Activated CD4-positive, alpha-beta T cell treated with anti-CD3 and anti-CD28 coated beads, Interleukin-2, amount 10 ng/mL, durations not matched to agents 24 days and 14 days (primary cell): ENCODE measurements at regions of chr4 and their contacts with region 1.

Region 1: DNA sequence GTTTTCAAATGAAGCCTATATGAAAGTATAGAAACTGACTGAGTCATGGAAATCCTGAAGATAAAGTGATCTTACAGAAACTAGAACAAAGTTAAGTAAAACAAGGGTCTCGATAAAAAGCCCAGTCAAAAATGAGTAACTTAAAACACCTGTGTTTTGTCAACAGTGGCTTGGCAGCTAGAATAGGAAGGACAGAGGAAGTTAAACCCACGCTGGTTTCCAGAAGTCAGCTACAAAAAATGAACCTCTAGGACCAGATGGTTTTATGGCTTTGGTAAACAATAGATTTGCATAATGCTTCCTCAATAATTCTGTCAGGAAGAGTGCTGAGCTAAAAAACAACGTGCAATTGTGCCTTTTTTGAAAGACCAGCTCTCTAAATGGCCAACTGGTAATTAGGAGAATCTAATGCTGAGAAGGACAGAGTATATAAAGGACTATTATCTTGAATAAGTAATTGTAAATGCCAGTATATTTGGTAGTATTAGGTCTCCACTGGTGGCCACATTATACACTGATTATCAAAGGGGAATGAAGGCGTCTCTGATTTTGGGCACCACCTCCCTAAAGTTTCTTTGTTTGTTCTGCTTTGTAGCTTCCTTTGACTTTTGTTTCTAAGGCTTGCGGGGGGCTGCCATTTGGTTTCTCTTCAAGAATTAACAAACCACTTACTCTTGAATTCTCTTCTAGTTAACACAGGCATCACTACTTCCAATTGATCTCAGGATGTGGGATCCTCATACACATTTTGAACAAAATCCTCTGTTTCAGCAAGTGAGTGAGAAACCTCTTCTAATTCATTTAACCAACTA is 72.2 kb upstream of the PPP3CA start:
- DNase-seq: peak; percentile 63
- H3K4me3 Mint-ChIP-seq: peak overlapping the region; percentile 71
- H3K27ac Mint-ChIP-seq: peak overlapping the region; percentile 55
- H3K4me1 Mint-ChIP-seq: peaks cover 44% of the 10 kb centered on the region
- H3K27me3 Mint-ChIP-seq: peaks cover 26% of the 10 kb centered on the region

Region 2: DNA sequence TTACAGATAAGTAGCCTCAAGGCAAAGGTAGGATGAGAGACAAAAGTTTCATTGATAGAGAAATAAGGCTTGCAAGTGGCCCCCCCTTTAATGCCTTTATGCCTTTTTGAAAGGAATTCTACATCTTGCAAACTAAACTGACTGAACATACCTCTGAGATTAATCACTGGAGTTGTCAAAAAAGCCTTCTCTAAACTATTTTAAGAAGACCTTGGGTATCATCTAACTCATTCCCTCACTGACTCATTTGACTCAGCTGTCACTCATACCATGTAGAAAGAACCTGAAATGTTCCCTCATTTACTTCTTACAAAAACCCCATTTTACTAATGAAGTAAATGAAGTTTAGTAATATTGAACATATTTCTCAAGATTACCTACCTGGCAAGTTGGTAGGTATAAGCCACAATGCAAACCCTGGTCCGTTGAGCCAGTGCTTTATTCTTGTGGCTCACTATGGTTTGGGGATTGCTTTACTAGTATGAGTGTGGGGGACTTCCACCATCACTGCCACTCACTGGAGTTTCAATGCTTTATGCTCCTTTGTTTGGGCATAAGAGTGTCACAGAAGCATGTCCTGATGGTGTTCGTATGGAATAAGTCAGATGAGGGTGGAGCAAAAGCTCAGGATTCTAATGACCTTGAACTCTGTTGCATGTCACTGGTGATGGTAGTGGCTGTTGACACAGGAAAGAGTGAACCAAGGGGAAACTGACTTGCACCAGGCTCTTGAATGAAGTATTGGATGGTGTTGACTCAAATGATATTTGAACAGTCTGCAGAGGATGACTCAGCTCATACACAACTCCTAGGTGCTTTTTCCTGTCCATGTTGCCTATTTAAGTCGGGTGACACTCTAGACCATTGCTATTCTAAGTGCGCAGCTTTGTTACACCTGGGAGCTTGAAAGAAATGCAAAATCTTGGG is 596.2 kb before region 1 on chr4:
- intact Hi-C with region 1: loop called (anchors 10 kb)
- DNase-seq: peak; percentile 65
- H3K4me3 Mint-ChIP-seq: no peak overlapping the region
- H3K27ac Mint-ChIP-seq: peak overlapping the region; percentile 86
- H3K4me1 Mint-ChIP-seq: peaks cover 19% of the 10 kb centered on the region
- H3K27me3 Mint-ChIP-seq: no peaks in the 10 kb centered on the region

Region 3: DNA sequence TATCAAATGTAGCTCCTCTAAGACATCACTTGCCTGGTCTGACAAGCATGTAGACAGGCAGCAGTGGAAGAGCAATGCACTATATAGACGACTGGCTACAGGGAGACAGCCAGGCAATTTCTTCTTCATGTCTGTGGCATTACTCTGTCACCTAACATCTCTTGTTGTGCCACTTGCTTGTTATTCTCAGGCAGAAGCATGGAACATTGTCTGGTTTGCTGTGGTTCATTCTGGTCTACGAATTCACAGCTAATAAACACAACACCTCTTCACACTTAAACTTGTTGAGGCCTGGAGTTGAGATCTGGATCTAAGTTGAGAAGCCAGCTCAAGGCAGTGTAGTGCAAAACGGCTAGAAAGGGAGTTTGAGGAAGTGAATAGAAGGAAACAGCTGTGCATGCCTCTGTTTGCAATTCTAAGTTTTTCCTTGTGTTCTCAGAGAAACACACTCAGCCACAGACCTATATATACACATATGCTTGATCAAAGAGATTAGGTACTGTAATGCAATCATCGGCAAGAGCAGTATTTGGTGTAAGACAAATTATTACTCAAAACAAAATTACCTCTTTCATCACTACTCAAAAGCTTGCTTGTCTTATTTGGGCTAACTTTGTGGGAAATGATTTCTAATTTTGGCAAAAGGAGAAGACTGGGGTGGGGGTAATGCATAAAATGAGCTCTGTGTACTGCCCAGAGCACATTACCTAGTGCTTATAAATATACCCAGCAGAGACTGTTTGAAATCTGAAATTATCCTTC is 316.0 kb before region 1 on chr4:
- intact Hi-C with region 1: loop called (anchors 5 kb)
- DNase-seq: peak; percentile 58
- H3K4me3 Mint-ChIP-seq: no peak overlapping the region
- H3K27ac Mint-ChIP-seq: peak overlapping the region; percentile 45
- H3K4me1 Mint-ChIP-seq: peaks cover 21% of the 10 kb centered on the region
- H3K27me3 Mint-ChIP-seq: no peaks in the 10 kb centered on the region

Region 4: GRCh38 chr4:101205916-101206315 is 213.6 kb before region 1 on chr4:
- intact Hi-C with region 1: loop called (anchors 1 kb)
- DNase-seq: peak; percentile 86
- H3K4me3 Mint-ChIP-seq: peak overlapping the region; percentile 13
- H3K27ac Mint-ChIP-seq: peak overlapping the region; percentile 50
- H3K4me1 Mint-ChIP-seq: peaks cover 23% of the 10 kb centered on the region
- H3K27me3 Mint-ChIP-seq: peaks cover 3% of the 10 kb centered on the region

Region 5: DNA sequence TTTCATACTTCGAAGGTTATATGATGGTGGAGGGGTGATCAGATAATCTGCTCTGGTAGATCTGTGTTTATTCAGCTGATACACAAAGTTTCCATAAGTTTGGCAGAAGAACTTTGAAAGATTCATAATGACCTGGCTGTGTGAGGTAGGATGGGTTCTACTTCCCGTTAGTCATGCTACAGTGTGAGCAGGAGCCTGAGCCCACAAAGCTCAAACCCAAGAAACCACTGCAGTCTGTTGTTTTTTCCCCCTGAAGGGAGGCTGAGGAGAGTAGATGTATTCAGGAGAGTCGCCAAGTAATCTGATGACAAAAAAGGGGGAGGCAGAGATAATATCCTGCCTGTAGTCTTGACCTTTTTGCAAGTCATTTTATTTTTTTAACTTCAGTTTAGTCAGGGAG is 19.4 kb before region 1 on chr4:
- intact Hi-C with region 1: loop called (anchors 1 kb)
- DNase-seq: peak; percentile 71
- H3K4me3 Mint-ChIP-seq: no peak overlapping the region
- H3K27ac Mint-ChIP-seq: peak overlapping the region; percentile 21
- H3K4me1 Mint-ChIP-seq: peaks cover 14% of the 10 kb centered on the region
- H3K27me3 Mint-ChIP-seq: peaks cover 11% of the 10 kb centered on the region

Region 6: DNA sequence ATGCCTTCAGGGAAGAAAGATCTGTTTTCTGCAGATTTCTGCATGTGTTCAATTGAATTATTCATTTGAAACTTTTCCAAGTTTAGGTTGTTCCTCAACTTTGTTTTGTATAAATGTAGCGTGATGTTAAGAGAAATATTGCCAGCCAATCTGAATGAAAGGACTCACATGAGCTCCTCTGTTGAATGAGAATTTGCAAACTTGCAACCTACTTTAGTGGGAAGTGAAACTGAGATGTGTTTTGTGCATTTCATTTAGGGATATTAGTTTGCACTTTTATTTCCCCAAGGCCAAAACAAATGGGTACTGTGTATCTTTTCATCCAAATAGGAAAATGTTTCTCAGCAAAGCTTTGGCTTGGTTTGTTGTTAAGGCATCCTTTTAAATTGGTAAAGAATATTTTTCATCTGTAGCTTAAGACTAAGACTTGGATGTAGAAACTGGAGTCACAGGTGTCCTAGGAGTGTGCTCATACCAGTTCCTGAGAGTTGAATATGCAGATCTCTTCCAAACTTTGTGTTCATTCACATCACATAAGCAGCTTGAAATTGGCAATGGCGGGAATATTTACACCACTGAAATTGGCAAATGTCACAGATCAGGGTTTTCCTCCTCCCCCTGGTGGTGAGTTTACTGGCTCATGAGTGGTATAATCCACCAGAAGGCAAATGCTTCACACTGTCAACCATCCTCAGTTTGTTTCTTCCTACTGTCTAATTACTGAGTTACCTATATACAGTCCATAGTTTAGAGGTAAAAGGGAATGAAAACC is 177.4 kb after region 1 on chr4:
- intact Hi-C with region 1: loop called (anchors 10 kb)
- DNase-seq: peak; percentile 73
- H3K4me3 Mint-ChIP-seq: no peak overlapping the region
- H3K27ac Mint-ChIP-seq: no peak overlapping the region
- H3K4me1 Mint-ChIP-seq: peaks cover 2% of the 10 kb centered on the region
- H3K27me3 Mint-ChIP-seq: peaks cover 5% of the 10 kb centered on the region